Naive thymus-derived CD4-positive, alpha-beta T cell (primary cell): ENCODE measurements at regions of chr5 and their contacts with region 1.

Region 1: GRCh38 chr5:80191991-80192398 is 63.9 kb downstream of the SERINC5 start:
- DNase-seq: peak in 7 of 9 donors; percentile 61 to 72 (median 68)
- ATAC-seq: peak; percentile 85
- H3K4me3 ChIP-seq: peak overlapping the region; percentile 46
- H3K4me3 Mint-ChIP-seq: peak overlapping the region; percentile 79 to 96 (median 85)
- H3K27ac ChIP-seq: peak overlapping the region; percentile 79
- H3K27ac Mint-ChIP-seq: peak overlapping the region; percentile 87 to 99 (median 95)
- H3K4me1 ChIP-seq: peaks cover 69 to 89% of the 10 kb centered on the region in 2 donors
- H3K4me1 Mint-ChIP-seq: peaks cover 61 to 97% (median 87%) of the 10 kb centered on the region in 7 donors
- H3K27me3 ChIP-seq: no peaks in the 10 kb centered on the region
- H3K27me3 Mint-ChIP-seq: no peaks in the 10 kb centered on the region

Region 2: DNA sequence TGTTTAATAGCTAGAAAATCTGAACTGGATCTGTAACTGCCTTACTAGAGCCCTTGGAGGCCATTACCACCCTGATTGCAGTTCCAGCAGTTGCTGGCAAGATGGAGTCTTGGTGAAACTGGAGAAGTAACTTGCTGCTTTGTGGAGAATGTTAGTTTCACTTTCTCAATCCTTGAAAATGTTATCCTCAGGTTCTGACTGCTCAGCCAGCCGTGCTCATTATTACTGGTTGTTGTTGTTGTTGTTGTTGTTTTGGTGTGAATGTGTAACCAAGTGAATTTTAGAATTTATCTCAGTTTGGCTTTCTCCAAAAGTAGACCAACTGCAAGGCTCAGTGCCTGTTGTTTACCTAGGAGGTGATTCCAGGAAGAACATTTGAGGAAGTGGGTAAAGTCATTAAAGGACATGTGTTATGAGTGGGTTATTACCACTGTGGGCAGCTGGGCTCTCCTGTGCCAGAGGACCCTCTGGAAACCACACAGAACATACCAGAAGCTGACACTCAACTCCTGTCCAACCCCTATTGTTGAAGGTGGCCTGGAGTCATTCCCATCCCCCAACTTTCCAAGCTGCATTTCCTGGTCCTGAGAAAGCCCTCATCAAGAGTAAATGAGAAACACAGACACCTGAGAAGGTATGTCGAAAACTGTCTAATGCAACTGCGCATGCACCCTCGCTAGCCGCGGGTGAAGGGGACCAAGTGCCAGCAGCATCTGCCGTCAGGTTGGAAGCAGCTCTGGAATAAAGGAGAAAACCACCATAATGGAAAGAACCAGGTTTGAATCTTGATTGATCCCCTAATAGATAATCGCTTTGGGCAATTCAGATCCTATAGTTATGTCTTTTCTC is 390.8 kb before region 1 on chr5:
- CTCF ChIA-PET with region 1: no interaction called
- POLR2A ChIA-PET with region 1: no interaction called
- intact Hi-C with region 1: no loop called
- DNase-seq: no peak
- ATAC-seq: no peak
- H3K4me3 ChIP-seq: no peak overlapping the region
- H3K4me3 Mint-ChIP-seq: peak overlapping the region in 5 of 10 donors; percentile 6 to 67 (median 24)
- H3K27ac ChIP-seq: no peak overlapping the region
- H3K27ac Mint-ChIP-seq: peak overlapping the region in 2 of 9 donors; percentile 69 to 82
- H3K4me1 ChIP-seq: peaks cover 0 to 11% of the 10 kb centered on the region in 2 donors
- H3K4me1 Mint-ChIP-seq: peaks cover 13 to 28% (median 21%) of the 10 kb centered on the region in 7 donors
- H3K27me3 ChIP-seq: no peaks in the 10 kb centered on the region
- H3K27me3 Mint-ChIP-seq: no peaks in the 10 kb centered on the region

Region 3: GRCh38 chr5:79990598-79991507 is 201.1 kb before region 1 on chr5 and contains the start of gene MTX3:
- CTCF ChIA-PET with region 1: no interaction called
- POLR2A ChIA-PET with region 1: no interaction called
- intact Hi-C with region 1: loop called in 1 of 2 experiments (anchors 5 kb)
- DNase-seq: peak; percentile 65 to 85 (median 82)
- ATAC-seq: peak; percentile 97
- H3K4me3 ChIP-seq: peak within 1 kb of the TSS; percentile 80
- H3K4me3 Mint-ChIP-seq: peak within 1 kb of the TSS; percentile 76 to 93 (median 88)
- H3K27ac ChIP-seq: peak within 1 kb of the TSS; percentile 75
- H3K27ac Mint-ChIP-seq: peak within 1 kb of the TSS; percentile 82 to 95 (median 92)
- H3K4me1 ChIP-seq: peaks cover 17 to 18% of the 10 kb centered on the region in 2 donors
- H3K4me1 Mint-ChIP-seq: peaks cover 17 to 47% (median 36%) of the 10 kb centered on the region in 7 donors
- H3K27me3 ChIP-seq: no peaks in the 10 kb centered on the region
- H3K27me3 Mint-ChIP-seq: peaks cover 0 to 13% (median 8%) of the 10 kb centered on the region in 5 donors
- total RNA-seq, gene MTX3: 12.9 to 31.0 (median 24.4) TPM

Region 4: GRCh38 chr5:80141147-80141671 is 50.8 kb before region 1 on chr5:
- CTCF ChIA-PET with region 1: interaction called, 5 read pairs
- POLR2A ChIA-PET with region 1: interaction called, 17 read pairs
- intact Hi-C with region 1: loop called in 1 of 2 experiments (anchors 2 kb)
- DNase-seq: peak in 1 of 9 donors; percentile 18
- ATAC-seq: no peak
- H3K4me3 ChIP-seq: no peak overlapping the region
- H3K4me3 Mint-ChIP-seq: peak overlapping the region in 9 of 10 donors; percentile 27 to 66 (median 47)
- H3K27ac ChIP-seq: peak overlapping the region; percentile 64
- H3K27ac Mint-ChIP-seq: peak overlapping the region; percentile 83 to 95 (median 89)
- H3K4me1 ChIP-seq: peaks cover 37 to 75% of the 10 kb centered on the region in 2 donors
- H3K4me1 Mint-ChIP-seq: peaks cover 58 to 99% (median 75%) of the 10 kb centered on the region in 7 donors
- H3K27me3 ChIP-seq: no peaks in the 10 kb centered on the region
- H3K27me3 Mint-ChIP-seq: no peaks in the 10 kb centered on the region

Region 5: DNA sequence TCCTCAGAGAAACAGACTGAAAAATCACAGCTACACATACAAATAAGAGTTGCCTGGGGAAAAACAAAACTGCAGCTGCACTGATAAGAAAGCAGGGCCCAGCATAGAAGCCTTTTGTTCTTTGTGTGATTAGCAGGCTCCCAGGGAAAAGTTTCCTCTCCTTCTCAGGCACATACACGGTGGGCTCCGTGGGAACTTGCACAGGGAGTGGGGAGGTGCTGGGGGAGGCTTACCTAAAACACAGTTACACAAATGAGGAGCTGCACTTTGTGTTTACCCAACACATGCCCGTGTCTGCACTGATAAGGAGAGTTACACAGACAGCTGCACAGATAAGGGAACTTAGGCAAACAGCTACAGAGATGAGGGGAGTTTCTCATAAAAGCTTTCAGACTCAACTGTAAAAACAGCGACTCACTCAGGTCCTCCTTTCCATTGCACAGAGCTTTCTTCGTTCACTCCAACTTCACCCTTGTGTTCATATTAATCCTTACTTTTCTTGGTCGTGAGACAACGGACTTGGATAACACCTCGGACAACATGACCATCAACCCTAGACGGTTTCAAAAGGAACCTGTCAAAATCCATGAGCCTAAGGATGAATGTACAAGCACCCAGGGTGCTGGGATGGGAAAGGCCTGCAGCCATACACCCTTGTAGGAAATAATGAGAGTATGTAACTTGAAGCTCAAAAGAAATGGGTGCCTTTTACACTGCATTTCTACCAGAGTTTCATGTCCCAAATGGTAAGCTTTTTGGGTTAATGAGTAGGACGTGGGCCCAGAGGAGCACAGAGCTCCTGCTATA is 13.0 kb after region 1 on chr5:
- CTCF ChIA-PET with region 1: interaction called, 17 read pairs
- POLR2A ChIA-PET with region 1: interaction called, 82 read pairs
- intact Hi-C with region 1: loop called in 1 of 2 experiments (anchors 1 kb)
- DNase-seq: peak in 6 of 9 donors; percentile 44 to 59 (median 49)
- ATAC-seq: peak; percentile 88
- H3K4me3 ChIP-seq: no peak overlapping the region
- H3K4me3 Mint-ChIP-seq: peak overlapping the region in 9 of 10 donors; percentile 58 to 82 (median 73)
- H3K27ac ChIP-seq: peak overlapping the region; percentile 54
- H3K27ac Mint-ChIP-seq: peak overlapping the region; percentile 46 to 99 (median 90)
- H3K4me1 ChIP-seq: peaks cover 10 to 74% of the 10 kb centered on the region in 2 donors
- H3K4me1 Mint-ChIP-seq: peaks cover 45 to 99% (median 91%) of the 10 kb centered on the region in 7 donors
- H3K27me3 ChIP-seq: no peaks in the 10 kb centered on the region
- H3K27me3 Mint-ChIP-seq: no peaks in the 10 kb centered on the region

Region 6: DNA sequence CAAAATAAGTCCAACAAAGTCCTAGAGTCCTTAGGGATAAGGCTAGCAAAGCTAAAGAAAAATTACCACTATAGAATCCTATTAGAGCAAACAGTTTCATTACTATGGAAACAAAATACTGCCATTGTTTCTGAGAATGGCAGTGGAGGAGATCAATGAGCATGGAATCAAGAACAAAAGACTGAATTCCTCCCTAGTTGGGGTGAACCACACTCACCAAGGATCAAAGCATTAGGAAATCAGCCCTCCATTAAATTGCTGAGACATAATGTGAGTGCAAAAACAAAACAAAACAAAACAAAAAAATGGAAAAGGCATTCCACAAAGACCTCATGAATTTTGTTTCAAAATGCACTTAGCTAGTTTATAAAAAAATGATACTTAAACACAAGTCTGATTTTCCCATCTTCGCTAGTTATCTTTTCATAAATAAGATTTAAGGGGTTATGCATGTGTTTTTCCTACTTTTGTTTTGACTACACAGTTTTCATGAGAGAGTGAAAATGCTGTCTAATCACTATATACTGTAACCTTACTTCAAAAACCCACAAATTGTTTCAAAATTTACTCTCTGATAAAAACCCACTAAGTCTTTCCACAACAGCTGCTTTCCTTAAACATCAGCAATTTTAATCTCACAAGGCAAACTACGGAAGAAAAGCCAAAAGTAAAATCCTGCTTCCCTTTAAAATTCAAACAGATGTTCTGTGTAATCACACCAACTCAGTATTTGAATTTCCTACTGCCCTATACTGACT is 54.2 kb after region 1 on chr5:
- CTCF ChIA-PET with region 1: no interaction called
- POLR2A ChIA-PET with region 1: interaction called, 108 read pairs
- intact Hi-C with region 1: loop called in 1 of 2 experiments (anchors 2 kb)
- DNase-seq: no peak
- ATAC-seq: no peak
- H3K4me3 ChIP-seq: no peak overlapping the region
- H3K4me3 Mint-ChIP-seq: peak overlapping the region in 9 of 10 donors; percentile 18 to 97 (median 52)
- H3K27ac ChIP-seq: peak overlapping the region; percentile 18
- H3K27ac Mint-ChIP-seq: peak overlapping the region; percentile 26 to 92 (median 67)
- H3K4me1 ChIP-seq: peaks cover 11 to 48% of the 10 kb centered on the region in 2 donors
- H3K4me1 Mint-ChIP-seq: peaks cover 45 to 82% (median 65%) of the 10 kb centered on the region in 7 donors
- H3K27me3 ChIP-seq: no peaks in the 10 kb centered on the region
- H3K27me3 Mint-ChIP-seq: no peaks in the 10 kb centered on the region

Region 7: GRCh38 chr5:80369521-80369920 is 177.5 kb after region 1 on chr5:
- CTCF ChIA-PET with region 1: no interaction called
- POLR2A ChIA-PET with region 1: no interaction called
- intact Hi-C with region 1: no loop called
- DNase-seq: no peak
- ATAC-seq: no peak
- H3K4me3 ChIP-seq: no peak overlapping the region
- H3K4me3 Mint-ChIP-seq: no peak overlapping the region
- H3K27ac ChIP-seq: no peak overlapping the region
- H3K27ac Mint-ChIP-seq: no peak overlapping the region
- H3K4me1 ChIP-seq: no peaks in the 10 kb centered on the region
- H3K4me1 Mint-ChIP-seq: peaks cover 0 to 5% (median 0%) of the 10 kb centered on the region in 7 donors
- H3K27me3 ChIP-seq: no peaks in the 10 kb centered on the region
- H3K27me3 Mint-ChIP-seq: peaks cover 7 to 19% (median 9%) of the 10 kb centered on the region in 5 donors